Astrocyte of the cerebellum (primary cell): ENCODE measurements at regions of chr4 and their contacts with region 1.

Region 1: GRCh38 chr4:26404743-26405206 is 84.0 kb downstream of the RBPJ start:
- DNase-seq: no peak
- H3K4me3 ChIP-seq: no peak overlapping the region
- CTCF ChIP-seq: no peak

Region 2: GRCh38 chr4:26320538-26321325 is 84.0 kb before region 1 on chr4 and contains the start of gene RBPJ:
- in situ Hi-C with region 1: loop called (anchors 5 kb)
- DNase-seq: peak; percentile 97
- H3K4me3 ChIP-seq: peak within 1 kb of the TSS; percentile 98
- CTCF ChIP-seq: no peak

Region 3: GRCh38 chr4:26351685-26352084 is 53.1 kb before region 1 on chr4:
- in situ Hi-C with region 1: loop called (anchors 5 kb)
- DNase-seq: no peak
- H3K4me3 ChIP-seq: no peak overlapping the region
- CTCF ChIP-seq: no peak